B cell (primary cell): ENCODE measurements at regions of chr12 and their contacts with region 1.

Region 1: GRCh38 chr12:92973601-92974000 is 44.5 kb upstream of the EEA1 start:
- DNase-seq: no peak
- ATAC-seq: no peak
- H3K4me3 ChIP-seq: no peak overlapping the region
- H3K4me3 Mint-ChIP-seq: peak overlapping the region; percentile 50
- H3K27ac ChIP-seq: no peak overlapping the region
- H3K27ac Mint-ChIP-seq: peak overlapping the region; percentile 73
- H3K4me1 ChIP-seq: peaks cover 25 to 48% of the 10 kb centered on the region in 2 donors
- H3K4me1 Mint-ChIP-seq: peaks cover 56% of the 10 kb centered on the region
- H3K27me3 ChIP-seq: no peaks in the 10 kb centered on the region
- H3K27me3 Mint-ChIP-seq: no peaks in the 10 kb centered on the region
- CTCF ChIP-seq: no peak

Region 2: DNA sequence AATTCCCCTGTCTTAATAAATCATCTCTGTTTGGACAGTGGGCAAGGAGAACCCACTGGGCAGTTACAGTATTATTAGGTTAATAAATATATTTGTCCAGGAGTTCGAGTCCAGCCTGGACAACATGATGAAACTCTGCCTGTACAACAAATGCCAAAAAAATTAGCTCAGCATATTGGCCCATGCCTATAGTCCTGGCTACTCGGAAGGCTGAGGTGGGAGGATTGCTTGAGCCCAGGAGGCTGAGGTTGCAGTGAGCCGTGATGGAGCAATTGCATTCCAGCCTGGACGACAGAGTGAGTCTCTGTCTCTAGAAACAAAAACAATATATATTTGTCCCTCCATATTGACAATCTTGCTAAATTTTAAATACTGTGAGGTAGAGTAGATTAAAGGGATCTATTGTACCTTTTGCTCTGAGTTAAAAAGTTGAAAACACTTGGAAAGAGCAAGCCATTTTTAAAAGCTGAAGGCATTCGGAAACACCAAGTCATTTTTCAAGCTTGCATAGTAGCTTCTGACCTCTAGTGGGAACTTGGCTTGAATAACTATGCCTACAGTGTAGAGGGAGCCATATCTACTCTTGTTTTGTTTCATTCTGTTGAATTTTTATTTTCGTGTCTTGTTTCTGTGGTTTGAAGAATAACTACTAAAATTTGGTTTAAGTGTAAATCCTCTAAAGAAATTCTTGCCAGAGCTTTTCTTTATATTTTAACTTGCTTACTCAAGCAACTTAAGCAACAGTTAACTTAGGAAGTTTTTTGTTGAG is 29.9 kb before region 1 on chr12:
- CTCF ChIA-PET with region 1: no interaction called
- POLR2A ChIA-PET with region 1: interaction called, 4 read pairs
- intact Hi-C with region 1: loop called (anchors 5 kb)
- DNase-seq: no peak
- ATAC-seq: no peak
- H3K4me3 ChIP-seq: no peak overlapping the region
- H3K4me3 Mint-ChIP-seq: no peak overlapping the region
- H3K27ac ChIP-seq: peak overlapping the region in 1 of 2 donors; percentile 9
- H3K27ac Mint-ChIP-seq: peak overlapping the region; percentile 61
- H3K4me1 ChIP-seq: peaks cover 15 to 32% of the 10 kb centered on the region in 2 donors
- H3K4me1 Mint-ChIP-seq: peaks cover 31% of the 10 kb centered on the region
- H3K27me3 ChIP-seq: no peaks in the 10 kb centered on the region
- H3K27me3 Mint-ChIP-seq: no peaks in the 10 kb centered on the region
- CTCF ChIP-seq: no peak

Region 3: DNA sequence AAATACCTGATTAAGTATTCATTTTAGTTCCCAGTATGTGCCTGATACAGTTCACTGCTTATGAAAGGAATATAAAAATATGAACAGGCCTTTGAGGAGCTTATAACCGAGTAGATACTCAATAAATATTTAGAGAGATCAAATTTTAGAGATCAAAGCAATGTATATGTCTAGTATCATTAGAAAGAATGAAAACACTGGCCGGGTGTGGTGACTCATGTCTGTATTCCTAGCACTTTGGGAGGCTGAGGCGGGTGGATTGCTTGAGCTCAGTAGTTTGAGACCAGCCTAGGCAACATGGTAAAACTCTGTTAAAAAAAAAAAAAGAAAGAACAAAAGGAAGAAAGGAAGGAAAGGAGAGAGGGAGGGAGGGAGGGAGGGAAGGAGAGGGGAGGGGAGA is 68.7 kb after region 1 on chr12:
- CTCF ChIA-PET with region 1: no interaction called
- POLR2A ChIA-PET with region 1: no interaction called
- intact Hi-C with region 1: no loop called
- DNase-seq: no peak
- ATAC-seq: no peak
- H3K4me3 ChIP-seq: no peak overlapping the region
- H3K4me3 Mint-ChIP-seq: no peak overlapping the region
- H3K27ac ChIP-seq: no peak overlapping the region
- H3K27ac Mint-ChIP-seq: no peak overlapping the region
- H3K4me1 ChIP-seq: no peaks in the 10 kb centered on the region
- H3K4me1 Mint-ChIP-seq: no peaks in the 10 kb centered on the region
- H3K27me3 ChIP-seq: no peaks in the 10 kb centered on the region
- H3K27me3 Mint-ChIP-seq: no peaks in the 10 kb centered on the region
- CTCF ChIP-seq: no peak

Region 4: DNA sequence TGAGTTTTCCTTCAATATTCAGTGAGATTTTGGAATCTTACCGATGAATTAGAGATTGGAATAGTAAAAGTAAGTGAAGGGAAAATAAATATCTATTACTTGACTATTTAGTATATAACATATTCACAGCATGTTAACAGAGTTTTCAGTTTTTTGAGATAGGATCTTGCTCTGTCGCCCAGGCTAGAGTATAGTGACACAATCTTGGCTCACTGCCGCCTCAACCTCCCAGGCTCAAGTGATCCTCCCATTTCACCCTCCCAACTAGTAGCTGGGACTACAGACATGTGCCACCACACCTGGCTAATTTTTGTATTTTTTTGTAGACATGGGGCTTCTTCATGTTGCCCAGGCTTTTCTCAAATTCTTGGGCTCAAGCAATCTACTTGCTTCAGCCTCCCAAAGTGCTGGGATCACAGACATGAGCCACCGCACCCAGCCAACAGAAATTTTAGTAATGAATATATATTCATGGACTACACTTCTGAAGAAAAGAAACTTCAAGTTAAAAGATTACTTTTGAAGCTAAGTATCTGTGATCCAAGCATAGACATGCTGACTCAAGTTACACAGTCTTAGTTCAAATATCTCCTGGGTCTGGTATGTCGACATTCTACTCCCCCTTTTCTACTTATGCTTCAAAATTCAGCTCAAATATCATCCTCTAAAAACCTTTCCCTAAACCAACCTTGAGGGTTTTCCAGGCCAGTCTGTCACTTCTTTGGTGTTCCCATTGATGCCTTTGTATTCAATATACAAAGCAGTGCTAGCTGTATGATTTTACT is 454.4 kb after region 1 on chr12:
- CTCF ChIA-PET with region 1: no interaction called
- POLR2A ChIA-PET with region 1: interaction called, 10 read pairs
- intact Hi-C with region 1: no loop called
- DNase-seq: no peak
- ATAC-seq: no peak
- H3K4me3 ChIP-seq: no peak overlapping the region
- H3K4me3 Mint-ChIP-seq: no peak overlapping the region
- H3K27ac ChIP-seq: peak overlapping the region; percentile 67 to 80
- H3K27ac Mint-ChIP-seq: peak overlapping the region; percentile 77
- H3K4me1 ChIP-seq: peaks cover 75 to 77% of the 10 kb centered on the region in 2 donors
- H3K4me1 Mint-ChIP-seq: peaks cover 80% of the 10 kb centered on the region
- H3K27me3 ChIP-seq: no peaks in the 10 kb centered on the region
- H3K27me3 Mint-ChIP-seq: no peaks in the 10 kb centered on the region
- CTCF ChIP-seq: no peak